ENCODE measurements at regions of chr6 and their contacts with region 1.

Region 1: DNA sequence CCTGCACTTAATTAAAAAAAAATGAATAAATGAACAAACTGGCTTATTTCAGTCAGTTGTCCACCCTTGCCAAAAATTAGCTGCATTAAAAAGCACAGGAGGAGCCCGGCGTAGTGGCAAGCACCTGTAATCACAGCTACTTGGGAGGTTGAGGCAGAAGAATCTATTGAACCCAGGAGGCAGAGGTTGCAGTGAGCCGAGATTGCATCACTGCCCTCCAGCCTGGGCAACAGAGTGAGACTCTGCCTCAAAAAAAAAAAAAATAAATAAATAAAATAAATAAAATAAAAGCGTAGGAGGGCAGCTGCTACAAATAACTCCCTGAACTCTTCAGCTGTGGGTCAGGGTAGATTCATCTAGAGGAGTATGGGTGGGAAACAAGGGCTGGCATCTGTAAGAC is 3.6 kb upstream of the CD164 start:
- DNase-seq: no peak
- ATAC-seq: no peak

Region 2: GRCh38 chr6:108476847-108477430 is 908.9 kb before region 1 on chr6:
- intact Hi-C with region 1: no loop called
- DNase-seq: no peak
- ATAC-seq: no peak

Region 3: DNA sequence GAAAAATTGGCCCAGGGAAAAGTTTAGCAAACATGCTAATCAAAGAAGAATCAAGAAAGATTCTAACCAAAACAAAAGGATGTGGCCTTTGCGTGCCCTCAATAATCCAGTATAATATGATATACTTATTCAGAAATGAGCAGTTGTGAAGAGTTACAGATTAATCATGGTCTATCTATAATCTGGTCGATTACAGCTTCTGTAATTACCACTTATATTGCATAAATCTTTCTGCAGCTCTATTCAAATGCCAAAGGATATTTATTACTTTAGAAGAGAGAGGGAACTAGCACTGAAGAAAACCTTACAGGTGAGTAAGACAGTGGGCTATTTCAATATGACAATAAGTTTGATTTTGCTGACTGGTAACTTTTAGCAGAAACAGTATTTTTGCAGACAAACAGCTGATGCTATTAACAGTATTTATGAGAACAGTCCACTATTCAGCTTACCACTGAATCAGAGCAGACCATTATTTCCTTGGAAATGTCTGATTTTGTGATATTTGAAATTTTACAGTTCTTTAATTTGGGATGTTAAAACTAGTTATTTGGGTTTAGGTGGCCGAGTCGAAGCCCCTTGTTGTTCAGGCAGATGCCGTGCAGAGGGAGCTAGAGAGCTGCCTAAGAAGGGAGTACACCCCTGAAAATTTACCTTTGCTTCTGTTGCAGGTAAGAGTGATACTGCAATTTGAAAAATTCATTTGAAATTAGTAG is 198.3 kb before region 1 on chr6:
- intact Hi-C with region 1: loop called (anchors 2 kb)
- DNase-seq: peak; percentile 46
- ATAC-seq: peak; percentile 71

Region 4: DNA sequence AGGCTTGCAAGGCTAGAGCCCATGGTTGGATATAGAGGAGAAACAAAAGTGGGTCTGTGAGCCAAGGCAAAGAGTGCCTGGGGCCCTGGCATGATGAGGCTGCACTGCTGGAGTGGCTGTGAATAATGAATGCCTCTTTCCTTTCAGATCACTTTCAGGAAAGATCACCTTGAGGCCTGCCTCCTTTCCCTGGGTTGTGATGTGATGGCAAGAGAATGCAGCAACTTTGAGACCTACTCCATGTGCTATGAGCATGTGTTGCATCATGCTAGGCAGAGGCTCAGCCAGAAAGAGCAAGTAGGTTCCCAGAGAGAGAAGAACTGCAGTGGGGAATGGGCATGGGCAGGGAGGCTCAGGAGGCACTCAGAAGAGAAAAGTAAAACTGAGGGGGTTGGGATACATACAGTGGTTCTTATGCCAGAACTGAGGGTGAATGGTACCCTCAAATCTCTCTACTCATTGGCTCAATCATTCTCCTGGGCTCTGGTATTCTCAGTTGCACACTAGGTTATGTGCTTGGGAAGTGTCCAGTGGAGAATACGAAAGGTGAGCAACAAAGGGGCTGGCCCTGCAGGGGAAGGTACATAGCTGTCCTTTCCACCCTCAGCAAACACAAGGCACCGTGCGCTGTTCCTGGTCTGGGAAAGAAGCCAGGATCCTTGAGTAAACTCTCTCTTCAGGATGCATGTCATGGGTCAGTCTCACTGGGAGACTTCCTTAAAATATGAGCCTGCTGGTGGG is 49.4 kb before region 1 on chr6:
- intact Hi-C with region 1: no loop called
- DNase-seq: no peak
- ATAC-seq: peak; percentile 88